WTC11 (cell line): ENCODE measurements at regions of chr11 and their contacts with region 1.

Region 1: GRCh38 chr11:58524232-58525036 is 16.5 kb upstream of the OR5B21 start:
- DNase-seq: peak; percentile 68
- ATAC-seq: peak; percentile 99
- H3K4me3 Mint-ChIP-seq: peak overlapping the region; percentile 60
- H3K27ac Mint-ChIP-seq: peak overlapping the region; percentile 63
- H3K4me1 Mint-ChIP-seq: peaks cover 8% of the 10 kb centered on the region
- H3K27me3 Mint-ChIP-seq: no peaks in the 10 kb centered on the region; the same call in 1 of the 2 replicates
- CTCF ChIP-seq: peak; percentile 70

Region 2: GRCh38 chr11:57823859-57824258 is 700.6 kb before region 1 on chr11:
- CTCF ChIA-PET with region 1: interaction called, 14 read pairs
- POLR2A ChIA-PET with region 1: interaction called, 5 read pairs
- DNase-seq: no peak
- ATAC-seq: no peak; the same call in 1 of the 2 replicates
- H3K4me3 Mint-ChIP-seq: no peak overlapping the region
- H3K27ac Mint-ChIP-seq: no peak overlapping the region
- H3K4me1 Mint-ChIP-seq: no peaks in the 10 kb centered on the region
- H3K27me3 Mint-ChIP-seq: no peaks in the 10 kb centered on the region
- CTCF ChIP-seq: no peak

Region 3: GRCh38 chr11:58286249-58286648 is 238.2 kb before region 1 on chr11:
- CTCF ChIA-PET with region 1: interaction called, 15 read pairs
- POLR2A ChIA-PET with region 1: no interaction called
- DNase-seq: no peak
- ATAC-seq: peak; percentile 97
- H3K4me3 Mint-ChIP-seq: no peak overlapping the region
- H3K27ac Mint-ChIP-seq: no peak overlapping the region
- H3K4me1 Mint-ChIP-seq: no peaks in the 10 kb centered on the region
- H3K27me3 Mint-ChIP-seq: no peaks in the 10 kb centered on the region
- CTCF ChIP-seq: no peak; the same call in 1 of the 2 replicates

Region 4: GRCh38 chr11:58513747-58514367 is 10.6 kb before region 1 on chr11:
- CTCF ChIA-PET with region 1: interaction called, 36 read pairs
- POLR2A ChIA-PET with region 1: no interaction called
- DNase-seq: peak; percentile 64
- ATAC-seq: peak; percentile 87
- H3K4me3 Mint-ChIP-seq: no peak overlapping the region
- H3K27ac Mint-ChIP-seq: no peak overlapping the region
- H3K4me1 Mint-ChIP-seq: peaks cover 16% of the 10 kb centered on the region
- H3K27me3 Mint-ChIP-seq: 0 out of 2 replicates have a peak, but pooled peaks cover 5% of the 10 kb centered on the region
- CTCF ChIP-seq: 0 out of 2 replicates have a peak, but pooled peaks have one; percentile 41

Region 5: DNA sequence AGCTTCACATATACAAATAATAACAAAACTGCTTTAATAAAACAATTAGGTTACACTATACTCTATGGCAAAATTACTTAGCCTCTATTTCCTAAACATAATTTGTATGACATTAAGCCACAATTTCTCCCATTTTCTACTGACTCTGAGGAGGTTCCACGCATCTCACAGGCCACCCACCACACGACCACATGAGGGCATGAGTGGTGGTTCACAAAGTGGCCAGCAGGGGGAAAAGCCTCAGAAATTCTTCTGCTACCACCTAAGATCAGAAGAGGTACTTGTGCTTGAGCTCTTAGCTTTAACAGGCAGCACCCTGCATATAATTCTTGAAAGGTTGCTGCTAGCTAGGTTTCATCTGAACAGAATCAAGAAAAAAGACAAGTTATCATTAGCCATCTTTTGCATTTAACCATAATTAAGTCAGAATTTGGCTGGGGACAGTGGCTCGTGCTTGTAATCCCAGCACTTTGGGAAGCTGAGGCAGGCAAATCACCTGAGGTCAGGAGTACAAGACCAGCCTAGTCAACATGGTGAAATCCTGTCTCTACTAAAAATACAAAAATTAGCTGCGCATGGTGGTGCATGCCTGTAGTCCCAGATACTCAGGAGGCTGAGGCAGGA is 43.6 kb after region 1 on chr11:
- CTCF ChIA-PET with region 1: interaction called, 14 read pairs
- POLR2A ChIA-PET with region 1: no interaction called
- DNase-seq: peak; percentile 69
- ATAC-seq: peak; percentile 88
- H3K4me3 Mint-ChIP-seq: no peak overlapping the region
- H3K27ac Mint-ChIP-seq: no peak overlapping the region
- H3K4me1 Mint-ChIP-seq: no peaks in the 10 kb centered on the region
- H3K27me3 Mint-ChIP-seq: no peaks in the 10 kb centered on the region
- CTCF ChIP-seq: peak; percentile 73